Prostate gland (tissue), 2 donors: ENCODE measurements at regions of chr3 and their contacts with region 1.

Region 1: GRCh38 chr3:107574650-107575049 is 51.9 kb downstream of the BBX start:
- DNase-seq: no peak
- H3K4me3 ChIP-seq: no peak overlapping the region
- H3K27ac ChIP-seq: no peak overlapping the region
- H3K4me1 ChIP-seq: no peaks in the 10 kb centered on the region
- H3K27me3 ChIP-seq: no peaks in the 10 kb centered on the region
- CTCF ChIP-seq: peak in 3 of 4 experiments; percentile 27 to 55 (median 50)
- POLR2A ChIP-seq: no peak

Region 2: GRCh38 chr3:107740992-107741896 is 166.6 kb after region 1 on chr3:
- intact Hi-C with region 1: loop called (anchors 5 kb)
- DNase-seq: no peak
- H3K4me3 ChIP-seq: no peak overlapping the region
- H3K27ac ChIP-seq: no peak overlapping the region
- H3K4me1 ChIP-seq: no peaks in the 10 kb centered on the region
- H3K27me3 ChIP-seq: no peaks in the 10 kb centered on the region
- CTCF ChIP-seq: peak in 3 of 4 experiments; percentile 35 to 67 (median 65)
- POLR2A ChIP-seq: no peak